ENCODE measurements at regions of chr10 and their contacts with region 1.

Region 1: DNA sequence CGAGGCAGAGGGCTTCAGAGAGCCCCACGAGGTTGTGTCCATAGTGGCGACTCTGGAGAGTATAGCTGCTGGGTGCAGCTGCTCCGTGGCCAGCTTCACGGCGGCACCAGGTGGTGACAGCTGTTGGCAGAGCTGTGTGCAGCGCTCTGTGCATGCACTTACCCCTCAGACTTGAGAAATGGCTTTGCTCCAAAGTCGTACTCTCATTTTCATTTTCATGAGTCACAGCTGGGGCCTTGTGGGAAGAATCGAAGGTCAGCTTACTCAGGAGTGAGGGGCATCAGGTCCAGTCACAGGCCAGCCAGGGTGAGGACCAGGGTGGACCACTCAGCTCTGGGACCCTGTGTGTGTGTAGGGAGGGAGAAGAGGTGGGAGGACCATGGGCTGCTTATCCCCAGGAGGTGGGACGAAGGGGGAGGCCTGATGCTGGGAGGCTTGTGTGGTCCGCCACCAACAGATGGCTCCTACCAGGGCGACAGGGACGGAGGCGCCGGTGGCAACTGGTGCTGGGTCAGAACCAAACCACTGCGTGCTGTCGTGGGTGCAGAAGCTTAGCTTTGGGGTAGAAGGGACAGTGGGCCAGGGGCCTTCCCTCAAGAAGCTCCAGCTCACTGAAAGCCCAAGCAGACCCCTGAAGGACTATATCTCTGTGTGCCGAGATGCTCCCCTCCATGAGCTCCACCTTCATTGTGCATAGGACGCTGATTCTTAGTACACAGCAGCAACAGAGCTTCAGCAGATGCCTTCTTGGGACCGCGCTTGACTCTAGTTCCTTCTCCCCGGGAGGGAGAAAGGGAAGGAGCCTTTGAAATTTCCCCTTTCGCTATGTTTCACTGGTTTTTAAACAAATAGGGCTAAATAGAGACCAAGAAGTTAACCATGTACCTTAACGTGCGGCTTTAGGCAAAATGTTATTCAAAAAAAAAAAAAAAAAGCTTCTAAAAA is 225.0 kb downstream of the CELF2 start:
- DNase-seq: peak; percentile 79
- ATAC-seq: peak; percentile 92

Region 2: GRCh38 chr10:11165591-11166543 is 76.8 kb before region 1 on chr10:
- intact Hi-C with region 1: no loop called
- DNase-seq: peak; percentile 84
- ATAC-seq: peak; percentile 81

Region 3: GRCh38 chr10:11204351-11204942 is 38.3 kb before region 1 on chr10:
- intact Hi-C with region 1: loop called (anchors 5 kb)
- DNase-seq: peak; percentile 76
- ATAC-seq: no peak

Region 4: GRCh38 chr10:11295492-11295891 is 52.8 kb after region 1 on chr10:
- intact Hi-C with region 1: no loop called
- DNase-seq: no peak
- ATAC-seq: no peak

Measured in Right ventricle myocardium inferior (tissue), 1 donor.